Ascending aorta (tissue), 2 donors: ENCODE measurements at regions of chr3 and their contacts with region 1.

Region 1: GRCh38 chr3:194070634-194071409 is 65.1 kb upstream of the HES1 start:
- DNase-seq: peak; percentile 37 to 95
- H3K4me3 ChIP-seq: peak overlapping the region; percentile 53 to 76
- H3K27ac ChIP-seq: peak overlapping the region; percentile 74 to 86
- H3K4me1 ChIP-seq: peaks cover 6 to 10% of the 10 kb centered on the region in 2 donors
- H3K27me3 ChIP-seq: no peaks in the 10 kb centered on the region
- CTCF ChIP-seq: no peak

Region 2: GRCh38 chr3:194003125-194004057 is 67.4 kb before region 1 on chr3:
- intact Hi-C with region 1: loop called (anchors 1 kb)
- DNase-seq: peak; percentile 82 to 95
- H3K4me3 ChIP-seq: peak overlapping the region; percentile 55 to 57
- H3K27ac ChIP-seq: peak overlapping the region; percentile 70 to 90
- H3K4me1 ChIP-seq: peaks cover 4 to 29% of the 10 kb centered on the region in 2 donors
- H3K27me3 ChIP-seq: no peaks in the 10 kb centered on the region
- CTCF ChIP-seq: no peak

Region 3: DNA sequence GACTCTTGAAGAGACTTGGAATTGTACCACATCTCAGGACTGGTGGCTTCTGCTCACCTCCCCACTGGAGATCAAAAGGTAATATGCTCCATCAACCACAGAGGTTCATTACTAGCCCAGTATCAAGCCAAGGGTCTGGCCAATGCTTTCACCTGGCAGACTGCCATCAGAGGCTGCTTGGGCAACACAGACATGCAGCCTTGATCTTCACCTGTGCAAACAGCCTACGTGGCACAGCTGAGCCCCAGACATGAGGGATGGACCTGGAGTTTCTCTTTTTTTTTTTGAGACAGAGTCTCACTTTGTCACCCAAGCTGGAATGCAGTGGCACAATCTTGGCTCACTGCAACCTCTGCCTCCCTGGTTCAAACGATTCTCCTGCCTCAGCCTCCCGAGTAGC is 40.5 kb before region 1 on chr3:
- intact Hi-C with region 1: no loop called
- DNase-seq: no peak
- H3K4me3 ChIP-seq: no peak overlapping the region
- H3K27ac ChIP-seq: no peak overlapping the region
- H3K4me1 ChIP-seq: no peaks in the 10 kb centered on the region
- H3K27me3 ChIP-seq: no peaks in the 10 kb centered on the region
- CTCF ChIP-seq: no peak

Region 4: DNA sequence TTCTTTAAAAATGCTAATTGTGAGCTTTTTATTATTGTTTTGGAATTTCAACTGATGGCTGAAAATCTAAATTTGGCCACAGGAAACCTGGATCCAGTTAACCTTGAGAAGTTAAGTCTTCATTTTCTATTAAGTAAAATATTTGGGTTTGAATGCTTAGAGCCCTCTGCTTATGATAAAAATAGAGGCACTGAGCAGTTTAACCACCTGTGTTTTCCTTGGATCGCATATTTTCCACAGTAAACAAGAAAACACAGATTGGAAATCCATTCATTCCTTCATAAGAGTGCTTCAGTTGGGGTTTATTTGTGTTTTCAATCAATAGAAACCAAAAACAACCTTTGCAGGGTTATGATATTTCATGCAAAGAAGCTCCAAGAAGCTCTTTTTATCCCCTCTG is 12.1 kb before region 1 on chr3:
- intact Hi-C with region 1: loop called (anchors 1 kb)
- DNase-seq: no peak
- H3K4me3 ChIP-seq: peak overlapping the region; percentile 48 to 56
- H3K27ac ChIP-seq: no peak overlapping the region
- H3K4me1 ChIP-seq: peaks cover 0 to 5% of the 10 kb centered on the region in 2 donors
- H3K27me3 ChIP-seq: no peaks in the 10 kb centered on the region
- CTCF ChIP-seq: no peak

Region 5: DNA sequence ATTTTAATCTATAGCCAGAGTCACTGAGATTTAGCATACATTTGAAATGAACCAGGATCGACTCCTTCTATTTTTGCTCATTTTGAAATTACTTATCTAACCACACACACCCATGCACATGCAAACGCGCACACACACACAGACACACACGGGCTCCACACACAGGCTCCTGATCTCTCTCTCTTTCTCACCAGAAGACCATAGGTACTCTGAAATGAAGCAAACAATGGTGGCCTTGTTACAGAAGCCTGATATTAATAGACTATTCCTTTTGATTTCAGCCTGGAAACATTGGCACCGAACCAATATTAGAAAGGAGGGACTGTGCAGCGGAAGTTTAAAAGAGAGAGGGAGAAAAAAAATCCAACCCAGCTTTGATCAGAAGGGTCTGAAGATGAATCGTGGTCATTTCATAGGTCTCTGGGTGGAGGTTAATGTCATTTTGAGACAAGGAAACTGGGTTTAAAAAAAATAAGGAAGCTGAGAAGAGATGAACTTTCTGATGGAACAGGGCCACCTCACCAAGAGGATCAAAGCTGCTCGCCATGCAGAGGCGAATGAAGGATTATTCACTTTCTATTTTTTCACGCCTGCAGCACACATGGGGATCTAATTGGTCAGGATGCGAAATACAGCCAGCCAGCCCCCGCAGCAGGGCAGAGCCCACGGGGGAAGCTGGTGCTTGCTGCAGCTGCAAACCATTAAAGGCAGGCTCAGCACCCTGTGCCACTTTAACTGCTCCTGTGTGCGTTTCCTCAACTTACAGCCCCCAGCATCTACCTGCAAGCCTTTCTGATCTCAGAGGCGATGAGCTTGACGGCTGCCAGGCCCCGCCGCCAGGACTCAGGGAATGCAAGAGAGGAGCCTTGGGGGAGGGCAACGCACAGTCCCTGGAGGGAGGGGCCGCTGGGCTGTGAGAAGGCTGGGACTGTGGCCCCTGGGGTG is 153.9 kb after region 1 on chr3:
- intact Hi-C with region 1: no loop called
- DNase-seq: no peak
- H3K4me3 ChIP-seq: no peak overlapping the region
- H3K27ac ChIP-seq: no peak overlapping the region
- H3K4me1 ChIP-seq: no peaks in the 10 kb centered on the region
- H3K27me3 ChIP-seq: no peaks in the 10 kb centered on the region
- CTCF ChIP-seq: no peak

Region 6: DNA sequence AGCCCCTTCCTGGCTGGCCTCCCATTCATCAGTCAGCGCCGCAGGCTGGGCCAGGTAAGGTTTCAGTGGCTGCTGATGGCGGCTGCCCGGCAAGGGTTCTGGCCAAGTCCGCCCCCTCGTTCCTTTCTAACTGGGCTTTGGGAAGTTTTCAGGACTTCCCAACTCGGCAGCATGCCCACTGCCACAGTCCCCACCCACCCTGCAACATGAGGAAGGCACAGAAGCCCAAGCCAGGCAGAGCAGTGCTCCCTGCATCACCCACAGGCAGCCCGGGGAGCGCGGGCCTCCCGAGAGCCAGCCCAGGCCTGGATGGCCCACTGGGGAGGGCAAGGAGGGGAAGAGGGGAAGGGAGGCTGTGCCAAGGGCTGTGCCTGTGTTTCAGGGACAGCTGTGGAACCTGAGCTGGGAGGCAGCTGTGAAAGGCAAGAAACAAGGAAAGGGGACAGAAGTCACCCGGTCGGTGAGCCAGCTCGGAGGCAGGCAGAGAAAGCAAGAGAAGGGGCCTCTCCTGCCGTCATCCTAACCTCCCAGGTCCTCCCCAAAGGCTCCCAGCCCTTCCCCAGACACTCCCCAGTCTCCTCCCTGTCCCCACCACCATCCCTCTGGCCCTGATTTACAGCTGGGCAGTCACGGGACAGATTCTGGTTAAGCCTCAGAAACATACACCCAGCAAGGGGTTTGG is 206.4 kb after region 1 on chr3:
- intact Hi-C with region 1: loop called (anchors 5 kb)
- DNase-seq: peak in 1 of 2 donors; percentile 87
- H3K4me3 ChIP-seq: peak overlapping the region in 1 of 2 donors; percentile 6
- H3K27ac ChIP-seq: peak overlapping the region; percentile 73 to 84
- H3K4me1 ChIP-seq: peaks cover 13 to 38% of the 10 kb centered on the region in 2 donors
- H3K27me3 ChIP-seq: no peaks in the 10 kb centered on the region
- CTCF ChIP-seq: no peak

Region 7: DNA sequence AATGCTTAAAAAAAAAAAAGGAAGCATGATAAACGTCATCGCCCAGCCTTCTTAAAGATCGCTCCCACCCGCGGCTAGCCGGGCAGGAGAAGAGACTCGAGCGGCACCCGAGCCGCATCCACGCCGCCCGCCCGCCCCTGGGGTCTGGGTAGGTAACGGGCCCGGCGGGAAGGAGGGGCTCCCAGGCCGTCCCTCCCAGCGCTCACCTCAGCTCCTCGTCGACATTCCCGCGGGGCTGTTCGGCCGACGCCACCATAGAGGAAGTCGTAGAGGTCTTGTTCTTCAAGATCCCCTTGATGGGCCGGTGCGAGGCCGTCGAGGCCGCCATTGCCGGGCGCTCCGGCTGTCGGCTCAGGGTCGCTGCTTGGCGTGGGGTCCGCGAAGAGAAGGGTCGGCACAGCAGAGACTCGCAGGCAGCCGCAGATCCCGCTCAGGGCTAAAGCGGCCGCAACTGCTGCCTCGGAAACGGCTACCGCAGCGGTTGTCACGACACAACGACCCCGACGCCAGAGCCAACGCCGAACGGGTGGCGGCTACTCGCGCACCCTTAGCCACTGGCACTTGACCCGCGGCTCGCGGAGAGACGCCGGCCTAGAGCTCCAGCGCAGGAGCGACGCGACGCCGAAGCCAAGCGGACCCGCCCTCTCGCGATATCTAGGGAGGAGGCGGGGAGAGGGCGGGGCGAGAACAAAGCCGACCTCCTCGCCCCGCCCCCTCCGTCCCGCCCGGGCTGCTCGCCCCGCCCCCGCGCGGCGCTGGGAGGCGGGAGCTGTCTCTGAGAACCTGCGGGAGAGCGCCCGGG is 1472.1 kb after region 1 on chr3 and contains the start of gene PPP1R2:
- intact Hi-C with region 1: loop called (anchors 10 kb)
- DNase-seq: peak; percentile 51 to 95
- H3K4me3 ChIP-seq: peak within 1 kb of the TSS; percentile 78 to 83
- H3K27ac ChIP-seq: peak within 1 kb of the TSS; percentile 87 to 93
- H3K4me1 ChIP-seq: peaks cover 21 to 48% of the 10 kb centered on the region in 2 donors
- H3K27me3 ChIP-seq: no peaks in the 10 kb centered on the region
- CTCF ChIP-seq: no peak
- total RNA-seq, gene PPP1R2: 62.3 TPM